PC-9 (cell line): ENCODE measurements at regions of chr4 and their contacts with region 1.

Region 1: DNA sequence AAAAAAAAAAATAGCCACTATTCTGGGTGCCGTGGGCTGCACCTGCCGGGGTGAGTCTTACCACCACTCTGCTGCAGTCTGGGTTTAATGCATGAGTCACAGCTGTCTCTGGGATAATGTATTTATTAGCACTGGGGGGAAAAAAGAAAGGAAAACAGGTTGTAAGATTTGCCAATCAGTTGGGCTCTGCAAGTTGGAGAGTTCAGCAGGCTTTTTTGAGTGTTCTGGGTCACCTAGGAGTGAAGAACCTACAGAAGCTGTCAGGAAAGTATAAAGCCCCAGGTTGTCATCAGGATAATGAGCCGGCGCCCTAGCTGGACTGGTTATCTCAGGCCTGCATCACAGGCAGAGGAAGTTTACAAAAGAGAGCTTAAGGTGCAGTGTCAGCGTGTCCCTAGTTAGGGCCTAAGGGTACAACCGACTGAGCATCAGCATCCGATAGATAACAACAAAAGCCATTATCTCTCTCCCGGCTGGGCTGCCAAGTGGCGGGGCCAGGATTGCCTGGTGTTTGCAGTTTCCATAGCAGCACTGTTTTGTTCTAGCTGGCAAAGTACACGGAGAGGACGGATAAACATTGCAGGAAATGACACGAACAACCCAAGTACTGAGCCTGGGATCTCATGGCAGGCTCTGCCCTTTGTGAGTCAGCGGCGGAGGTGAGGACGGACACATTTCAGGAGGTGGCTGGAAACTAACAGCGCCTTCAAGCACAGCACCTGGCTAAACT is 104.8 kb upstream of the NOCT start:
- DNase-seq: peak; percentile 79 to 88
- H3K4me3 ChIP-seq: peak overlapping the region; percentile 41; the same call in 1 of the 2 replicates
- H3K27ac ChIP-seq: peak overlapping the region; percentile 66
- H3K4me1 ChIP-seq: peaks cover 27% of the 10 kb centered on the region
- H3K27me3 ChIP-seq: no peaks in the 10 kb centered on the region
- CTCF ChIP-seq: no peak

Region 2: GRCh38 chr4:138111456-138112000 is 799.2 kb before region 1 on chr4:
- CTCF ChIA-PET with region 1: no interaction called
- POLR2A ChIA-PET with region 1: interaction called, 14 read pairs
- intact Hi-C with region 1: no loop called
- DNase-seq: peak in 1 of 2 experiments; percentile 11
- H3K4me3 ChIP-seq: no peak overlapping the region
- H3K27ac ChIP-seq: no peak overlapping the region
- H3K4me1 ChIP-seq: no peaks in the 10 kb centered on the region
- H3K27me3 ChIP-seq: no peaks in the 10 kb centered on the region
- CTCF ChIP-seq: no peak